Cardiac septum (tissue), 1 donor: ENCODE measurements at regions of chr11 and their contacts with region 1.

Region 1: DNA sequence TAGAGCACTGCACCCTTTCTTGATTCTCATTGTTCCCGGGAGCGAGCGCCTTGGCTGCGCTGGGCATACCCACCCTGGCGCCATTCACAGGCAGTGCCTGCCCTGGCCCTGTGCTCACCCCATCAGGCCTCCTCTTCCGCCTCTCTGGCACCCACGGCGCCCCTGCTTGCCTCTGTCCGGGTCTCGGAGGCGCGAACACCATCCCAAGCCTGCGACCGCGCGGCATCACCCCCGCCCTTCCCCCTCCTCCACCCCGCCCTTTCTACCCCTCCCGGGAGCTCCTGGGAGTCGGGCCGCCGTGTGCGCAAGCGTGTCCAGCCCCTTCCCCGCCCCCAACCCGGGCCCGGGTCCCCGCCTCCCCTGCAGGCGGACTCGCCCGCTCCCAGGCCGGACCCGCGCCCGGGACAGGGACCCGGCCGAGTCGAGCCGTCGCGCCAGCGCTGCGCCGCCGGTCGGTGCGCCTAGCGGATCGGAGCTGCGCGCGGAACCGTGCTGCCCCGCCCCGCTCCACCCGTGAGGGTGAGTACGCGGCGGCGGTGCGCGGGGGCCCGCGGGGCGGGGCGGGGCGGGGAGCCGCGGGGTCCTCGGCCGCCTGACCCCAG is at the start of gene ST3GAL4:
- DNase-seq: peak; percentile 96
- total RNA-seq, gene ST3GAL4: 55.1 TPM

Region 2: DNA sequence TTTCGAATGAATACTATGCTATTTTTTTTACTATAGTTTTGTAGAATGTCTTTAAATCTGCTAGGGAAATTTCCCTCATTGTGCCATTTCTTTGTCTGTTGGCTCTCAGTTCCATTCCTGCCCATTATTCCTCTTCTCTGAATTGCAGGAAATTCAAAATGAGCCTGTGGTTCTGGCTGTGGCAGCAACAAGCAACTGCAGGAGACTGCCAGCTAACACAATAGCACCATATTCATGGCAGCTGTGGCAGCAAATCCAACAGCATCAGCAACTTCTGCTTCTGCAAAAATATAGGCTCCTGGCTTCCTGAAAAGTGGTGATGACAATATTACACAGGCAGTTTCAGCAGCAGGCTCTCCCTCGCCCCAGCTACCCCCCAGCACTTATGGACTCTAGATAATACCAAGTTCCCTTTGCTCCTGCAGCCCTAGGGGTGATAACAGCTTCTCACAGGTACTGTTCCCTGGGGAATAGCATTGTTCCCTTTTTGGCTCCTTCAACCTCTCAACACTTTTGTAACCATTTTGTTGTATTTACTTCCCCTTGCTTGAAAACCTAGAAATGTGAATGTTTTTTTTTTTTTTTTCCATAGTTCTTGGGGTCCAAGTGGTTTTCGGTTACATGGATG is 513.0 kb before region 1 on chr11:
- intact Hi-C with region 1: no loop called
- DNase-seq: no peak

Region 3: GRCh38 chr11:126231725-126232459 is 123.5 kb before region 1 on chr11:
- intact Hi-C with region 1: no loop called
- DNase-seq: no peak

Region 4: DNA sequence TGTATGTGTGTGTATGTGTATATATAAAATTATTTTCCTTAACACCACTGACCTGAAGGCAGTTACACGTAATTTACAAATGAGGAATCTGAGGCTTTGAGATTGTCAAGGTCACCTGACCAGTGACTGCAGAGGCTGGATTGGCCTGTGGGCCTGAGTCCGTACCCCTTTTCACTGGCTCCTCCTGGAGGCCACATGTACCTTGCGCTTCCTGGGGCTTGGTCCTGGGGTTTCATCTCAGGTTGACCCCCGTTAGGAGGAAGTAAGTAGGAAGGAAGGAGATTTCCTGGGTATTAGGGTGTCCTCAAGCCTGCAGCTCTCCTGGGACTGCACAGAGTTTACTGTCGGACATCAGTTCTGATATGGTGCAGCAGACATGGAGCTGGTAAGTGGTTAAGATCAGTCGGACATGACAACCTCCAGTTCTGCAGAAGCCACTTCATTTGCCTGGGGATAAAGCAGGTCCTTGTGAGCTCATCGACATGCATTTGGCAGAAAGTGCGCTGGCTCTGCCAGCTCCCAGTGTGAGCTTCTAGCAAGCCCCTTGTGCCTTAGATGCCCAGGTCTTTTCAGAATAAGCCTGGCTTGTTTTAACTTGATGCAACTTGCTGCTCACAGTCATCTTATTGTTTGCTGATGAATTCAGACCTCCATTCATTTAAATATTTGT is 36.7 kb after region 1 on chr11:
- intact Hi-C with region 1: loop called (anchors 5 kb)
- DNase-seq: peak; percentile 74

Region 5: GRCh38 chr11:126416542-126417090 is 61.2 kb after region 1 on chr11:
- intact Hi-C with region 1: loop called (anchors 10 kb)
- DNase-seq: peak; percentile 95

Region 6: GRCh38 chr11:126431401-126432064 is 76.1 kb after region 1 on chr11:
- intact Hi-C with region 1: loop called (anchors 5 kb)
- DNase-seq: no peak